ENCODE measurements at regions of chr14 and their contacts with region 1.

Region 1: DNA sequence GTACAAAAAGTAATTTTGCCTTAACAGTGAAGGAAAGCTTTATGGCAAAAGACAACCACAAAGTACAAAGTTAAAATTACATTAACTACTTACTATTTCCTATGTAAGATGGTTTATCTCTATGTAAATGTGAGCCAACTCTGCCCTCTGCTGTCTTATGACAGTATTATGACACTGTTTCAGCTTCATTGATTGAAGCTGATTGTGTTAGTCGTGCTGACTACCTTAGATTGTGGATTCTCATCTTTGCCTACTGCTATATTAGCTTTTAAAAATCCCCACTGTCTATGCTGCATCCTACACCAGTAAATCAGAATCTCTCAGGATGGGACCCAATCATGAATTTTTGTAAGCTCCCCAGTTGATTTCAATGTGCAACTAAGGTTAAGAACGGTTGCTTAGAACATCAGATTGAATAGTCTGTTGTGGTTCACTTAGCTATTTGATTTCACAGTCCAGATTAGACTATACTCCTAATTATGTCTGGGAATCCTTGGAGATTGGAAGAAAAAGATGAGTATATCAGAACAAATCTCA is 12.2 kb upstream of the SPTB start:
- DNase-seq: peak; percentile 36
- ATAC-seq: peak; percentile 91
- H3K4me3 ChIP-seq: no peak overlapping the region
- H3K27ac ChIP-seq: no peak overlapping the region
- H3K4me1 ChIP-seq: no peaks in the 10 kb centered on the region
- H3K27me3 ChIP-seq: 0 out of 4 replicates have a peak, but pooled peaks cover 0 to 4% of the 10 kb centered on the region in 2 experiments
- CTCF ChIP-seq: peak; percentile 42 to 77 (median 62); a peak in 5 of 6 replicates
- EP300 ChIP-seq: no peak
- POLR2A ChIP-seq: no peak
- RAD21 ChIP-seq: peak; percentile 81

Region 2: DNA sequence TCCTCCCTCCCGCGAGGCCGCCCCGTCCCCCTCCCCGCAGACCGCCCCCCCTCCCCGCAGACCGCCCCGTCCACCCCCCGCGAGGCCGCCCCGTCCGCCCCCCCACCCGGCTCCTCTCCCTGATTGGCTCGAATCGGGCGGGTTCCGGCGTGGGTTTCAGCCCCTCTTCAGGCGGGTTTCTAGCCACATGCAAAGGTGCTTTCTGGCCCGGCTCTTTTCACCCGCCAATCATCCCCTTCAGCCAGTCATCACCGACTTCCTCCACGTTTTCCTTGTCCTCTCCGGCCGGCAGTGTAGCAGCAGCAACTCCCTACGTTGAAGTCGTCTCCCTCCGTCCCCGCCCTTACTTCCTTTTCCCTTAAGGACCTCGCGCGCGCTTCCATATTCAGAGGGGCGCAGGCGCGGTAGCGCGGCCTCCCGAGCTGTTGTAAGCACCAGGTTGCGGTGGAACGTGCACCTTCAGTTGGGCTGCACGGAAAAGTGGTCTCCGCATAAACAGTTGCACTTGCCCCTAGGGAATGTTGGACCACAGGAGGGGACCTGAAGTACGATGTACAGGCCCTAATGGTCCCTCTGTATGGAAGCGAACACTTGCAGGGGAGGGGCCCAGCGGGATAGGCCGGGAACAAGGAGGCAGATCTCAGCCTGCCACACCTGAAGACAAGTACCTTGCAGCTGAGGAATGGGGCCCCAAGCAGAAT is 553.1 kb before region 1 on chr14:
- CTCF ChIA-PET with region 1: interaction called, 10 read pairs
- POLR2A ChIA-PET with region 1: no interaction called
- RAD21 ChIA-PET with region 1: no interaction called
- SMC1A ChIA-PET with region 1: interaction called, 5 read pairs
- in situ Hi-C with region 1: no loop called
- intact Hi-C with region 1: no loop called
- DNase-seq: peak; percentile 96
- ATAC-seq: peak; percentile 91
- H3K4me3 ChIP-seq: peak overlapping the region; percentile 90
- H3K27ac ChIP-seq: peak overlapping the region; percentile 80
- H3K4me1 ChIP-seq: peaks cover 11% of the 10 kb centered on the region
- H3K27me3 ChIP-seq: no peaks in the 10 kb centered on the region
- CTCF ChIP-seq: no peak
- EP300 ChIP-seq: no peak
- POLR2A ChIP-seq: peak; percentile 78
- RAD21 ChIP-seq: no peak

Region 3: GRCh38 chr14:64758691-64759584 is 133.0 kb before region 1 on chr14:
- CTCF ChIA-PET with region 1: interaction called, 29 read pairs
- POLR2A ChIA-PET with region 1: no interaction called
- RAD21 ChIA-PET with region 1: interaction called, 16 read pairs
- SMC1A ChIA-PET with region 1: interaction called, 13 read pairs
- in situ Hi-C with region 1: no loop called
- intact Hi-C with region 1: loop called (anchors 2 kb)
- DNase-seq: no peak
- ATAC-seq: no peak
- H3K4me3 ChIP-seq: no peak overlapping the region
- H3K27ac ChIP-seq: no peak overlapping the region
- H3K4me1 ChIP-seq: no peaks in the 10 kb centered on the region
- H3K27me3 ChIP-seq: peaks cover 0 to 3% of the 10 kb centered on the region in 2 experiments; a peak in 3 of 4 replicates
- CTCF ChIP-seq: no peak
- EP300 ChIP-seq: no peak
- POLR2A ChIP-seq: no peak
- RAD21 ChIP-seq: no peak

Region 4: GRCh38 chr14:64800000-64800399 is 91.9 kb before region 1 on chr14:
- CTCF ChIA-PET with region 1: interaction called, 44 read pairs
- POLR2A ChIA-PET with region 1: no interaction called
- RAD21 ChIA-PET with region 1: interaction called, 11 read pairs
- SMC1A ChIA-PET with region 1: interaction called, 24 read pairs
- in situ Hi-C with region 1: no loop called
- intact Hi-C with region 1: loop called (anchors 2 kb)
- DNase-seq: no peak
- ATAC-seq: peak; percentile 52
- H3K4me3 ChIP-seq: no peak overlapping the region
- H3K27ac ChIP-seq: no peak overlapping the region
- H3K4me1 ChIP-seq: no peaks in the 10 kb centered on the region
- H3K27me3 ChIP-seq: peaks cover 0 to 5% of the 10 kb centered on the region in 2 experiments; a peak in 3 of 4 replicates
- CTCF ChIP-seq: peak in 2 of 3 experiments; percentile 2 to 40; a peak in 2 of 6 replicates
- EP300 ChIP-seq: no peak
- POLR2A ChIP-seq: no peak
- RAD21 ChIP-seq: no peak

Region 5: DNA sequence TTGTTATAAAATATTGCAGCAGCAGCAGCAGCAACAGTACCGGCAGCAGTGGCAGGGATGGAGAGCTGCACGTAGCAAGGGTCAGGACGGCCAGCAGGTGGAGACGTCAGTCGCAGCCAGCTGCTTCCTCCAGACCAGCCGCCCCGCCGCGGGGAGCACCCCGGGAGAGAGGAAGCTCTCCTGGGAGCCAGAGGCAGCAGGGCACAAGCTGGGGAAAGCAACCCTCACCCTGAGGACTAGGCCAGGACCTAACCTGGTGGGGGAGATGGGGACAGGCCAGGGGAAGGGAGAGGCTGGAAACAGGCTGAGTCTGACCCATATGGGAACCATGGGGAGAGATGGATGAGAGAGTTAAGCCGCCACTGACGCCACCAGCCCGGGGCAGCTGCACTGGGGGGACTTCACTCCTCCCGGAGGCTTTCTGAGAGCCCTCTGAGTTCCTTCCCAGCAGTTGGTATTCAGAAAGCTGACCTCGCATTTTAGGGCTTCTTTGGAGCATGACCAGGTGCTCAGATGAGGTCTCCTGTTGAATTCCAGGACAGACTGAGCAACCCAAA is 68.5 kb before region 1 on chr14:
- CTCF ChIA-PET with region 1: interaction called, 111 read pairs
- POLR2A ChIA-PET with region 1: interaction called, 4 read pairs
- RAD21 ChIA-PET with region 1: interaction called, 87 read pairs
- SMC1A ChIA-PET with region 1: interaction called, 88 read pairs
- in situ Hi-C with region 1: loop called (anchors 5 kb)
- intact Hi-C with region 1: loop called (anchors 1 kb)
- DNase-seq: no peak
- ATAC-seq: peak; percentile 98
- H3K4me3 ChIP-seq: no peak overlapping the region
- H3K27ac ChIP-seq: no peak overlapping the region
- H3K4me1 ChIP-seq: no peaks in the 10 kb centered on the region
- H3K27me3 ChIP-seq: peaks cover 0 to 3% of the 10 kb centered on the region in 2 experiments; a peak in 2 of 4 replicates
- CTCF ChIP-seq: peak; percentile 69 to 83 (median 81)
- EP300 ChIP-seq: no peak
- POLR2A ChIP-seq: no peak
- RAD21 ChIP-seq: peak; percentile 61

Region 6: GRCh38 chr14:64880221-64881121 is 11.4 kb before region 1 on chr14:
- CTCF ChIA-PET with region 1: interaction called, 75 read pairs
- POLR2A ChIA-PET with region 1: interaction called, 3 read pairs
- RAD21 ChIA-PET with region 1: interaction called, 10 read pairs
- SMC1A ChIA-PET with region 1: interaction called, 11 read pairs
- in situ Hi-C with region 1: no loop called
- intact Hi-C with region 1: no loop called
- DNase-seq: no peak
- ATAC-seq: peak; percentile 90
- H3K4me3 ChIP-seq: peak overlapping the region; percentile 59; the same call in 1 of the 2 replicates
- H3K27ac ChIP-seq: no peak overlapping the region
- H3K4me1 ChIP-seq: no peaks in the 10 kb centered on the region
- H3K27me3 ChIP-seq: peaks cover 7 to 20% of the 10 kb centered on the region in 2 experiments
- CTCF ChIP-seq: no peak
- EP300 ChIP-seq: no peak
- POLR2A ChIP-seq: no peak
- RAD21 ChIP-seq: no peak

Region 7: DNA sequence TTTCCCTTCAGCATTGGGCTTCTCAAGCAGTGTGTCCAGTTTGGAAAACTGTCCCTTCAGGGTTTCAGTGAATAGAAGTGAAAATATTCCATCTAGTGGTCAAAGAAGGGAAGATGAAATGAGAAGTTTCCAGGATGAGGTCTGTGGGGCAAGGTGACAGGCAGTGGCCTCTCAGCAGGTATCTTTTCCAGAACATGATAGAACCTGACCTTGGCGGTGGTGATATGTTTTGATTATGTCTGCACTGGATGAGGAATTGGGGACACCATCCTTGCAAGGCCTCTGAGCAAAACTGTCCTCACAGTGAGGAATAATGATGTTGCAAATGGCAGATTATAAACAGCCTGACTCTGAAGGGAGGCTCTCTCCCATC is 45.9 kb after region 1 on chr14:
- CTCF ChIA-PET with region 1: interaction called, 15 read pairs
- POLR2A ChIA-PET with region 1: interaction called, 3 read pairs
- RAD21 ChIA-PET with region 1: interaction called, 10 read pairs
- SMC1A ChIA-PET with region 1: interaction called, 7 read pairs
- in situ Hi-C with region 1: no loop called
- intact Hi-C with region 1: no loop called
- DNase-seq: no peak
- ATAC-seq: peak; percentile 20; the same call in 2 of the 3 replicates
- H3K4me3 ChIP-seq: no peak overlapping the region
- H3K27ac ChIP-seq: no peak overlapping the region
- H3K4me1 ChIP-seq: no peaks in the 10 kb centered on the region
- H3K27me3 ChIP-seq: no peaks in the 10 kb centered on the region
- CTCF ChIP-seq: peak in 2 of 3 experiments; percentile 8 to 19; a peak in 3 of 6 replicates
- EP300 ChIP-seq: no peak
- POLR2A ChIP-seq: no peak
- RAD21 ChIP-seq: peak; percentile 19; the same call in 1 of the 2 replicates

Region 8: GRCh38 chr14:65006261-65006721 is 114.4 kb after region 1 on chr14:
- CTCF ChIA-PET with region 1: no interaction called
- POLR2A ChIA-PET with region 1: no interaction called
- RAD21 ChIA-PET with region 1: no interaction called
- SMC1A ChIA-PET with region 1: no interaction called
- in situ Hi-C with region 1: no loop called
- intact Hi-C with region 1: no loop called
- DNase-seq: no peak
- ATAC-seq: no peak
- H3K4me3 ChIP-seq: no peak overlapping the region
- H3K27ac ChIP-seq: no peak overlapping the region
- H3K4me1 ChIP-seq: peaks cover 18% of the 10 kb centered on the region
- H3K27me3 ChIP-seq: no peaks in the 10 kb centered on the region
- CTCF ChIP-seq: no peak
- EP300 ChIP-seq: no peak
- POLR2A ChIP-seq: no peak
- RAD21 ChIP-seq: no peak

Measured in GM12878 (cell line).